ENCODE measurements at regions of chr1 and their contacts with region 1.

Region 1: GRCh38 chr1:169348383-169349036 is 19.1 kb downstream of the NME7 start:
- DNase-seq: peak; percentile 37
- H3K4me3 ChIP-seq: no peak overlapping the region; a peak in 1 of 4 replicates
- H3K27ac ChIP-seq: no peak overlapping the region
- H3K4me1 ChIP-seq: peaks cover 4% of the 10 kb centered on the region in 2 experiments; a peak in 1 of 4 replicates
- H3K27me3 ChIP-seq: no peaks in the 10 kb centered on the region
- CTCF ChIP-seq: peak; percentile 87
- EP300 ChIP-seq: no peak
- RAD21 ChIP-seq: peak; percentile 92

Region 2: GRCh38 chr1:168613691-168614231 is 734.7 kb before region 1 on chr1:
- CTCF ChIA-PET with region 1: interaction called, 189 read pairs
- POLR2A ChIA-PET with region 1: no interaction called
- DNase-seq: peak; percentile 55
- H3K4me3 ChIP-seq: no peak overlapping the region
- H3K27ac ChIP-seq: peak overlapping the region; percentile 68 to 95; a peak in 3 of 4 replicates
- H3K4me1 ChIP-seq: peaks cover 12 to 40% of the 10 kb centered on the region in 2 experiments
- H3K27me3 ChIP-seq: no peaks in the 10 kb centered on the region
- CTCF ChIP-seq: no peak
- EP300 ChIP-seq: peak; percentile 66 to 81; a peak in 3 of 4 replicates
- RAD21 ChIP-seq: peak; percentile 18

Region 3: DNA sequence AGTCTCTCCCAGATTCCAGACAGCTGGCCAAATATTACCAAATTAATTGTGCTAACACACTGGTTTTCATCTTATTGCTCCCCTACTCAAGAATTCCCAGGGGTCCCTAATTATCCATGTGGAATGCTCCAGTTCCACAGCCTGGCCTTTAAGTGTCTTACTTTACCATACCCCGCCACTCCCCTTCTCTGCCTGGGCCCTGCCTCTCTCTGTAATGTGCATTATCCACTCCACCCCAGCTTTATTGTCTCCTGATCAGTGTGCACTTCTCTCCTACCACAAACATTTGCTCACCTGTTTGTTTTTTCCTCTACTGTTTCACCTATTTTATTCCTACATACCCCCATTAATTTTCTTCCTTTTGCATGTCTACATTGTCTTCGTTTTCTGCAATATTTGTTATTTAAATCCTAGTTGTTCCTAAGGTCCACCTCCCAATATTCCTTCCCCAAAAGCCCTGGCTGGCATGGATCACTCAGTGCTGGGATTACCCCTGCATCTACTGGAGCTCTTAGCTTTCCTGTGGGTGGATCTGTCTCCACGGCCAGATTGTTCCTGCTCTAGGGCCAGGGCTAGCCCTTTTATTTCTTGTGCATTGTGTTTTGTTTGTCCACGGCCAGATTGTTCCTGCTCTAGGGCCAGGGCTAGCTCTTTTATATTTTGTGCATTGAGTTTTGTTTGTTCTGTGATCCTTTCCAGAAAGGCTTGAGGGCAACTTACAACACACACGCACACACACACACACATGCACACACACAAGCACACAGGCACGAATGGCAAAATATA is 275.4 kb before region 1 on chr1:
- CTCF ChIA-PET with region 1: no interaction called
- POLR2A ChIA-PET with region 1: no interaction called
- DNase-seq: no peak
- H3K4me3 ChIP-seq: no peak overlapping the region
- H3K27ac ChIP-seq: no peak overlapping the region
- H3K4me1 ChIP-seq: peaks cover 0 to 6% of the 10 kb centered on the region in 2 experiments; a peak in 2 of 4 replicates
- H3K27me3 ChIP-seq: no peaks in the 10 kb centered on the region
- CTCF ChIP-seq: no peak
- EP300 ChIP-seq: no peak
- RAD21 ChIP-seq: no peak

Region 4: DNA sequence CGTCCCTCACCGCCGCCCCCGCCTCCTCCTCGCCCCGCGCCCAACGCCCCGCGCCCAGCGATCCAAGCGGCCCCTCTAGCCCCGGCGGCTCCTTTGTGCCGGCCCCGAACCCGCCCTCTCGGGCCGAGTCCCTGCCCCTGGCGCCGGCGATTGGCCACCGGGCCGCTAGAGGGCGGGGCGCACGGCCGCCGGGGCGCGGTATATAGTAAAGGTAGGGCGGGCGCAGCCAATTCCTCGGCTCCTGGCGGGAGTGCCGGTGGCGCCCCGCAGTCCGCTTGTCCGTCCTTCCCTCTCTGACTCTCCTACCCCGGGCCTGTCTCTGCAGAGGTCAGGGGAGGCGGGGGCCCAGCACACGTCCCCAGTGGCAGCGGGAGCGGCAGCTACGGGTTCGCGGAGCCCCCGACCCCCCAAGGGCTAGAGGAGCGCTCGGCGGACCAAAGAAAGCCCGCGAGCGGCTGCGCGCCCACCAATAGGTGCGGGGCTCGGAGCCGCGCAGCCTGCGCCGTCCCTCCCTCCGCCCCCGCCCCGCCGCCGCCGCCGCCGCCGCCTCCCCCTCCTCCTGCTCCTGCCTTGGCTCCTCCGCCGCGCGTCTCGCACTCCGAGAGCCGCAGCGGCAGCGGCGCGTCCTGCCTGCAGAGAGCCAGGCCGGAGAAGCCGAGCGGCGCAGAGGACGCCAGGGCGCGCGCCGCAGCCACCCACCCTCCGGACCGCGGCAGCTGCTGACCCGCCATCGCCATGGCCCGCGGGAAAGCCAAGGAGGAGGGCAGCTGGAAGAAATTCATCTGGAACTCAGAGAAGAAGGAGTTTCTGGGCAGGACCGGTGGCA is 242.2 kb before region 1 on chr1 and contains the start of gene ATP1B1:
- CTCF ChIA-PET with region 1: interaction called, 38 read pairs
- POLR2A ChIA-PET with region 1: interaction called, 3 read pairs
- DNase-seq: peak; percentile 96
- H3K4me3 ChIP-seq: peak within 1 kb of the TSS; percentile 84 to 85
- H3K27ac ChIP-seq: peak within 1 kb of the TSS; percentile 95 to 97
- H3K4me1 ChIP-seq: peaks cover 28 to 64% of the 10 kb centered on the region in 2 experiments
- H3K27me3 ChIP-seq: no peaks in the 10 kb centered on the region
- CTCF ChIP-seq: peak; percentile 13; the same call in 1 of the 2 replicates
- EP300 ChIP-seq: no peak
- RAD21 ChIP-seq: no peak
- polyA plus RNA-seq, gene ATP1B1: 49.5 and 52.7 TPM in 2 replicates

Region 5: DNA sequence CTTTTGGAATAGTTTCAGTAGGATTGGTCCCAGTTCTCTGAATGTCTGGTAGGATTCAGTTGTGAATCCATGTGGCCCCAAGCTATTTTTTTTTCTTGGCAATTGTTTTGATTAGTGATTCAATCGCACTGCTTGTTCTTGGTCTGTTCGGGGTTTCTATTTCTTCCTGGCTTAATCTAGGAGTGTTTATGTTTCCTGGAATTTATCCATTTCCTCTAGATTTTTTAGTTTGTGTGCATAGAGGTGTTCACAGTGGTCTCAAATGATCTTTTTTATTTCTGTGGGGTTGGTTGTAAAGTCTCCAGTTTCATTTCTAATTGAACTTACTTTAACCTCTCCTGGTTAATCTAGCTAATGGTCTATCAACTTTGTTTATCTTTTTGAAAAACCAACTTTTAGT is 98.5 kb before region 1 on chr1:
- CTCF ChIA-PET with region 1: no interaction called
- POLR2A ChIA-PET with region 1: no interaction called
- DNase-seq: no peak
- H3K4me3 ChIP-seq: no peak overlapping the region
- H3K27ac ChIP-seq: no peak overlapping the region
- H3K4me1 ChIP-seq: no peaks in the 10 kb centered on the region
- H3K27me3 ChIP-seq: no peaks in the 10 kb centered on the region
- CTCF ChIP-seq: no peak
- EP300 ChIP-seq: no peak
- RAD21 ChIP-seq: no peak

Region 6: GRCh38 chr1:169361281-169361680 is 12.8 kb after region 1 on chr1:
- CTCF ChIA-PET with region 1: interaction called, 23 read pairs
- POLR2A ChIA-PET with region 1: no interaction called
- DNase-seq: no peak
- H3K4me3 ChIP-seq: no peak overlapping the region
- H3K27ac ChIP-seq: no peak overlapping the region
- H3K4me1 ChIP-seq: peaks cover 7 to 9% of the 10 kb centered on the region in 2 experiments; a peak in 3 of 4 replicates
- H3K27me3 ChIP-seq: no peaks in the 10 kb centered on the region
- CTCF ChIP-seq: no peak
- EP300 ChIP-seq: no peak
- RAD21 ChIP-seq: no peak

Measured in SK-N-SH (cell line).